ENCODE measurements at regions of chr1 and their contacts with region 1.

Region 1: DNA sequence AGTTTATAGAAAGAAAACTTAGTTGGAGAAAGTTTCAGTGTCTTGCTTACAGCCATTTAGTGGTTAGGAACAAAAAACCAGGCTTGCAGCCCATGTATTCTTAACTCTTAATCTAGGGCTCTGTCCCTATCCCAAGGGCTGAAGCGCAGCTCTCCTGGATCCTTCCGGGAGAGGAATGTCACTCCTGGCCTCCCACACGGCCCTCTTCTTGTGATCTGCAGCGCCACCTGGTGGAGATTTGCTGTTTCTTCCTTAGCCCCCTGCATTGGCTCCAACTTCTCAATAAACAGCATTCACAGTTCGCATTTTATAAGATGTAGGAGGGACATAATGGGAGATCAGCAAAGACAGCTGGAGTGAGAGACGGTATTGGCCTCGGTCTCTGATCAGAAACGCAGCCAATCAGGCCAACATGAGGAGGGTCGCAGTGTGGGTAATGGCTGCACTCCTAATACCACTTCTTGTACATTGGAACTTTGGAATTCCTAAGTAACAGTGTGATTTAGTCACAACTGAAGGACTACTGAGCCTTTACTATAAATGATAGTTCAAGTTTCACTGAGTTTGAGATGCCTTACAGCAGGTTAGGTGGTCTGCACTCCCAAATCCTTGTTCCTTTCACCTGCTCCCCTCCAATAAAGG is 283.4 kb downstream of the ASTN1 start:
- DNase-seq: peak; percentile 75
- H3K4me3 ChIP-seq: peak overlapping the region in 1 of 2 experiments; percentile 20; a peak in 1 of 4 replicates
- H3K27ac ChIP-seq: no peak overlapping the region
- H3K4me1 ChIP-seq: peaks cover 0 to 4% of the 10 kb centered on the region in 2 experiments; a peak in 1 of 4 replicates
- H3K27me3 ChIP-seq: no peaks in the 10 kb centered on the region
- CTCF ChIP-seq: peak; percentile 93
- EP300 ChIP-seq: no peak
- RAD21 ChIP-seq: peak; percentile 86

Region 2: GRCh38 chr1:176869577-176869976 is 11.5 kb before region 1 on chr1:
- CTCF ChIA-PET with region 1: interaction called, 14 read pairs
- POLR2A ChIA-PET with region 1: no interaction called
- DNase-seq: no peak
- H3K4me3 ChIP-seq: no peak overlapping the region
- H3K27ac ChIP-seq: no peak overlapping the region
- H3K4me1 ChIP-seq: no peaks in the 10 kb centered on the region
- H3K27me3 ChIP-seq: no peaks in the 10 kb centered on the region
- CTCF ChIP-seq: no peak
- EP300 ChIP-seq: no peak
- RAD21 ChIP-seq: no peak